T-cell (primary cell): ENCODE measurements at regions of chr16 and their contacts with region 1.

Region 1: GRCh38 chr16:82535262-82535661 is 91.5 kb upstream of the CDH13 start:
- DNase-seq: no peak
- ATAC-seq: no peak
- H3K4me3 ChIP-seq: no peak overlapping the region
- H3K4me3 Mint-ChIP-seq: no peak overlapping the region
- H3K27ac ChIP-seq: no peak overlapping the region
- H3K27ac Mint-ChIP-seq: no peak overlapping the region
- H3K4me1 ChIP-seq: no peaks in the 10 kb centered on the region
- H3K4me1 Mint-ChIP-seq: no peaks in the 10 kb centered on the region
- H3K27me3 ChIP-seq: no peaks in the 10 kb centered on the region
- H3K27me3 Mint-ChIP-seq: peaks cover 6 to 15% of the 10 kb centered on the region in 2 donors

Region 2: DNA sequence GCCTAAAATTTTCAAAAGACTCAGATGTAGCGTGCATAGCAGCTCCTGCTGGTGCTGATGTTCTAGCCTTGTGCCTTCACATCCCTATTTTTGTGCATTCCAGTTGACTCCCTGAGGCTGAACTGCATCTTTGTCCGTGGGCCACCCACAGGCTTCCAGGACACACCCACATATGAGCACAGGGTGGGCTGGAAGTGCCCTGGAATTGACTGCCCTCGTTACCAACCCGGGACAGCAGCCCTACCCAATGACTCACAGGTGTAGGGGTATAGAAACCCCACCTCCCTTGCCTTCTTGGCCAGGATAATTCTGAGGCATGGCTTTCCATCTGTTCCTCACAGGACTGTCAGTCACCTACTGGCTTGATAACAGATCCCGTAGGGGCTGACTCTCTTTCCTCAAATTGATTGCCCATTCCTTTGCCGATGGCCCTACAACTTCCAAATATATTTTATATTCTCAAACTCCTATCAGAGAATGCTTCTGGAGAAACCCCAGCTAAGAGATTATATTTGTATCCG is 25.6 kb after region 1 on chr16:
- CTCF ChIA-PET with region 1: no interaction called
- POLR2A ChIA-PET with region 1: interaction called in 1 of 2 experiments, 20 read pairs
- DNase-seq: no peak
- ATAC-seq: no peak
- H3K4me3 ChIP-seq: no peak overlapping the region
- H3K4me3 Mint-ChIP-seq: no peak overlapping the region
- H3K27ac ChIP-seq: no peak overlapping the region
- H3K27ac Mint-ChIP-seq: no peak overlapping the region
- H3K4me1 ChIP-seq: no peaks in the 10 kb centered on the region
- H3K4me1 Mint-ChIP-seq: no peaks in the 10 kb centered on the region
- H3K27me3 ChIP-seq: peaks cover 0 to 2% of the 10 kb centered on the region in 2 experiments
- H3K27me3 Mint-ChIP-seq: peaks cover 0 to 1% of the 10 kb centered on the region in 2 donors

Region 3: GRCh38 chr16:82580298-82580890 is 45.1 kb after region 1 on chr16:
- CTCF ChIA-PET with region 1: no interaction called
- POLR2A ChIA-PET with region 1: no interaction called
- DNase-seq: peak in 1 of 35 experiments; percentile 37
- ATAC-seq: no peak
- H3K4me3 ChIP-seq: no peak overlapping the region
- H3K4me3 Mint-ChIP-seq: no peak overlapping the region
- H3K27ac ChIP-seq: no peak overlapping the region
- H3K27ac Mint-ChIP-seq: no peak overlapping the region
- H3K4me1 ChIP-seq: no peaks in the 10 kb centered on the region
- H3K4me1 Mint-ChIP-seq: no peaks in the 10 kb centered on the region
- H3K27me3 ChIP-seq: peaks cover 0 to 4% of the 10 kb centered on the region in 2 experiments
- H3K27me3 Mint-ChIP-seq: peaks cover 5 to 6% of the 10 kb centered on the region in 2 donors